Activated CD8-positive, alpha-beta T cell treated with anti-CD3 and anti-CD28 coated beads for 36 hours (primary cell): ENCODE measurements at regions of chr6 and their contacts with region 1.

Region 1: DNA sequence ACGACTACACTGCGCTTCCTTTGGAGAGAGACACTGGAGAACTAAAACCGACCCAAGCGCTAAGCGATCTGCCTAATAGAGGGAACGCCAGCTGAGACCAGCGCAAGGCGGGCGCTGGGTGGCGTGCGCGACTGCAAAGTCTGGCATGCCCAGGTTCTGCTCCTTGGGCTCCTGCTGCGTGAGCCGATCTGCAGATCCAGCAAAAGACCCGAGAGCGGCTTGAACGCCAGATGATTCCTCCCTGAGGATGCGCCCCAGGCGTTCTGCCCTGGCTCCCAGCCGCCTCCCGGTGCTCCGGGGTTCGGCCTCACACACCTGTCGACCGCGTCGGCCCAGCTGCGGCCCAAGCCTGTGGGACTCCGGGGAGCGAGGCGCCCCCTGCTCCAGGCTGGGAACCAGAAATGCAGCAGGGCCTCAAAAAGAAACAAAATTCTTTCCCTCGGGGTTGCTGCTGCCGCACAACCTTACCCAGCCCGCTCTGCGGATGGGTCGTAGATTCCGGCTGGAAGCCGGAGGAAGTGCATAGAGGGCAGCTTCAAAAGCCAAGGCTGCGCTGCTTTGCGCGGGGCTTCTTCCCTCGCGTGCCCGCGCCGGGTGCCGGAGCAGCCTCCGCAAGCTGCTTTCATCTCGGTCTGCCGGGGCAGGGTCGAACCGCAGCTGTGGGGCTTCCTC is 17.9 kb upstream of the PRDM13 start:
- DNase-seq: peak; percentile 82
- ATAC-seq: peak; percentile 93
- H3K4me3 Mint-ChIP-seq: peak overlapping the region; percentile 75
- H3K27ac Mint-ChIP-seq: no peak overlapping the region
- H3K4me1 Mint-ChIP-seq: peaks cover 22% of the 10 kb centered on the region
- H3K27me3 Mint-ChIP-seq: peaks cover 54% of the 10 kb centered on the region
- CTCF ChIP-seq: peak; percentile 71

Region 2: GRCh38 chr6:99545442-99545841 is 43.3 kb before region 1 on chr6:
- CTCF ChIA-PET with region 1: no interaction called
- POLR2A ChIA-PET with region 1: no interaction called
- intact Hi-C with region 1: no loop called
- DNase-seq: no peak
- ATAC-seq: no peak
- H3K4me3 Mint-ChIP-seq: no peak overlapping the region
- H3K27ac Mint-ChIP-seq: peak overlapping the region; percentile 30
- H3K4me1 Mint-ChIP-seq: peaks cover 3% of the 10 kb centered on the region
- H3K27me3 Mint-ChIP-seq: no peaks in the 10 kb centered on the region
- CTCF ChIP-seq: no peak

Region 3: DNA sequence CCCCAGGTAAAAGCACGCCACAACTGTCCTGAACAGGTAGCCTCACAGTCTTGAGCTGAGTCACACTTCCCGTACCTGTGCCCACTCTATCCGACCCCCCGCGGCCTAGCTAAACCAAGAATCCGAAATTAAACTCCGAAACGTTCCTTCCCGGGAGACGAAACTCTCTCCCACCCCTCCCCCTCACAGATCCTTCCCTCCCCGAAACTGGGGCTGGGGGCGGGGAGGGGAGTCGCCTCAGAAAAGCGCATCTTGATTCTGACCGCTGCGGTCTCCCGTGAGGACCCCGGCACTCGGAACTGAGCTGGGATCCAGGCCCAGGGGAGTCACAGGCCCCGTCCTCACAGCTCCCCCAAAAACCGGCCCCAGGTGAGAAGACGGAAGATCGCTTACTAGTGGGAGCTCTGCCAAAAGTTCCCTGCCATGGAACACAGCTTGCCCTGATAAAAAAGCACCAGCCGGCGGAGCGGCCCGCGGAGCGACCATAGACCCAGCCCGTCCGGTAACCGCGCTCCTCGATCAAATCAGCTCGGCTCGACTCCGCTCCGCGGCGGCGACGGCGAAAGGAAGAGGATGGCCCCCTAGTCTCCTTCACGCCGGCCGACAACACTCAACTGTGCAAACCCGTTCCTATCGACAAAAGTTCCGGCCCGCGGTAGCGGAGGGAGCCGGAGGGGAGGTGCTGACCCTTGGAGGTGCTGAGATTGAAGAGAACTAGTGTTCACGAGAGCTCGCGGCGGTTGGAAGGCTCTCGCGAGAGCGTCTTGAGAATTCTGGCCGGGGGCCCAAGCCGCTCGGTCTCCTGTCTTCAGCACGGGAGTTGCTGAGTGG is 20.4 kb before region 1 on chr6 and contains the start of gene CCNC:
- CTCF ChIA-PET with region 1: interaction called, 6 read pairs
- POLR2A ChIA-PET with region 1: interaction called, 15 read pairs
- intact Hi-C with region 1: no loop called
- DNase-seq: peak; percentile 94
- ATAC-seq: peak; percentile 98
- H3K4me3 Mint-ChIP-seq: peak within 1 kb of the TSS; percentile 97
- H3K27ac Mint-ChIP-seq: peak within 1 kb of the TSS; percentile 96
- H3K4me1 Mint-ChIP-seq: peaks cover 34% of the 10 kb centered on the region
- H3K27me3 Mint-ChIP-seq: no peaks in the 10 kb centered on the region
- CTCF ChIP-seq: no peak
- total RNA-seq, gene CCNC: 72.3 to 75.4 TPM

Region 4: DNA sequence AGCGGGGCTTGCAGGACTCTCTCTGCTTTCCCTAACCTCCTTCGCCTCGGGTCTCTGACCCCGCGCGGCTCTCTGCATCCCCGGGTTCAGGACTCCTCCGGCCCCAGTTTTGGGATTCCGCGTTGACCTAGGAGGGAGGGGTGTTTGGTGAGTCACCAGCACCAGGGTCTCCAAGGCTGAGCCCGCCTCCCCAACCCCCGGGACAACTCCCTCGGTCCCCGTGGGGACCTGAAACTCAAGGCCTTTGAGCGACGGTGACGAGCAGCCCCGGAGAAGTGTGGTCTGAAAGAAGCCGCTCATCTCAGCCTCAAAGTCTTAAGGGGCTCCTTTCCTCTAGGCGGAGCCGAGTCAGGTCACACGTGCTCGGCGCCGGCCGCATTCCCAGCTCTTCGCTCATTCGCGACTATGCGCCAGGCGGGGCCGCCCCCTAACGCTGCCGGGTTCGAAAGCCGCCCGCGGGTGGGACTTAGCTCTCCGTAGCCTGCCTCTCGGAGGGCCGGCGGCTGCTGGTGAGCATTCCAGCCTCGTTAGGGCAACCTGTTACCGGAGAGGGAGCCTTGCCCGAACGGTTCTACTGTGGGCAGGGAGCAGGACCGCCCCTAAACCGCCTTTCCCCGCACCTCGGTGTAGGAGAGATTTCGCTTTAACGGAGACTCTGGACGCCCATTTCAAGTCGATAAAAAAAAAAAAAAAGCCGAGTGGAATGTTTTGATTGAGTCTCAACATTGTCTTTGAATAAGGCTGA is 14.8 kb after region 1 on chr6:
- CTCF ChIA-PET with region 1: interaction called, 21 read pairs
- POLR2A ChIA-PET with region 1: interaction called, 9 read pairs
- intact Hi-C with region 1: no loop called
- DNase-seq: peak; percentile 51
- ATAC-seq: peak; percentile 69
- H3K4me3 Mint-ChIP-seq: peak overlapping the region; percentile 48
- H3K27ac Mint-ChIP-seq: no peak overlapping the region
- H3K4me1 Mint-ChIP-seq: peaks cover 24% of the 10 kb centered on the region
- H3K27me3 Mint-ChIP-seq: peaks cover 81% of the 10 kb centered on the region
- CTCF ChIP-seq: no peak

Region 5: GRCh38 chr6:99613409-99613704 is 24.6 kb after region 1 on chr6:
- CTCF ChIA-PET with region 1: interaction called, 21 read pairs
- POLR2A ChIA-PET with region 1: interaction called, 6 read pairs
- intact Hi-C with region 1: no loop called
- DNase-seq: peak; percentile 49
- ATAC-seq: peak; percentile 64
- H3K4me3 Mint-ChIP-seq: peak overlapping the region; percentile 66
- H3K27ac Mint-ChIP-seq: no peak overlapping the region
- H3K4me1 Mint-ChIP-seq: peaks cover 32% of the 10 kb centered on the region
- H3K27me3 Mint-ChIP-seq: peaks cover 74% of the 10 kb centered on the region
- CTCF ChIP-seq: no peak

Region 6: GRCh38 chr6:99736302-99736701 is 147.5 kb after region 1 on chr6:
- CTCF ChIA-PET with region 1: interaction called, 18 read pairs
- POLR2A ChIA-PET with region 1: no interaction called
- intact Hi-C with region 1: no loop called
- DNase-seq: peak; percentile 7
- ATAC-seq: peak; percentile 55
- H3K4me3 Mint-ChIP-seq: no peak overlapping the region
- H3K27ac Mint-ChIP-seq: no peak overlapping the region
- H3K4me1 Mint-ChIP-seq: no peaks in the 10 kb centered on the region
- H3K27me3 Mint-ChIP-seq: peaks cover 20% of the 10 kb centered on the region
- CTCF ChIP-seq: no peak

Region 7: DNA sequence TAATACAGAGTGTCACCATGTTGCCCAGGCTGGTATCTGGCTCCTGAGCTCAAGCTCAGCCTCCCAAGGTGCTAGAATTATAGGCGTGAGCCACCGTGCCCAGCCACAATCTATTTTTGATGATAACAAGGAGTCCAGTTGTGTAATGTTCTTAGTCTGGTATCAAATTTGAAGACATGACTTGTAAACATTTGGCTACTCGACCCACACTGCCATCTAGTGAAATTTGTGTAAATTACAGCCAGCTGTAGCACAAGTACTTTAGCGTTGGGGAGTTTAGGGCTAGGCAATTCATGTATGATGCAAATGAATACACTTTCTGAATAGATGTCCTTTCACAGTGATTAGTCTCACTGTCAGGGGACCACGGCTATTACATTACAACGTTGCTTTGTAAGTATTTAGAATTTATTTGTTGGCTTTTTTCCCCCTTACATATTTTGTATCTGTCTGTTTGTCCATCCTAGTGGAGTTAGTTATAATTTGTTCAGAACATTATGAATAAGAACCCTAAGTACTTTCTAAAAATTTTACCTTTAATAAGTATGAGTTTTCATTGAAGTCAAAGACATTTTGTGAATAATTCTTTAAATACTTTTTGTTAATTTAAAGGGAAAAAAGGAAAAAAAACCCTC is 157.6 kb after region 1 on chr6:
- CTCF ChIA-PET with region 1: interaction called, 93 read pairs
- POLR2A ChIA-PET with region 1: interaction called, 3 read pairs
- intact Hi-C with region 1: loop called (anchors 1 kb)
- DNase-seq: peak; percentile 71
- ATAC-seq: peak; percentile 82
- H3K4me3 Mint-ChIP-seq: no peak overlapping the region
- H3K27ac Mint-ChIP-seq: no peak overlapping the region
- H3K4me1 Mint-ChIP-seq: no peaks in the 10 kb centered on the region
- H3K27me3 Mint-ChIP-seq: peaks cover 20% of the 10 kb centered on the region
- CTCF ChIP-seq: peak; percentile 86

Region 8: DNA sequence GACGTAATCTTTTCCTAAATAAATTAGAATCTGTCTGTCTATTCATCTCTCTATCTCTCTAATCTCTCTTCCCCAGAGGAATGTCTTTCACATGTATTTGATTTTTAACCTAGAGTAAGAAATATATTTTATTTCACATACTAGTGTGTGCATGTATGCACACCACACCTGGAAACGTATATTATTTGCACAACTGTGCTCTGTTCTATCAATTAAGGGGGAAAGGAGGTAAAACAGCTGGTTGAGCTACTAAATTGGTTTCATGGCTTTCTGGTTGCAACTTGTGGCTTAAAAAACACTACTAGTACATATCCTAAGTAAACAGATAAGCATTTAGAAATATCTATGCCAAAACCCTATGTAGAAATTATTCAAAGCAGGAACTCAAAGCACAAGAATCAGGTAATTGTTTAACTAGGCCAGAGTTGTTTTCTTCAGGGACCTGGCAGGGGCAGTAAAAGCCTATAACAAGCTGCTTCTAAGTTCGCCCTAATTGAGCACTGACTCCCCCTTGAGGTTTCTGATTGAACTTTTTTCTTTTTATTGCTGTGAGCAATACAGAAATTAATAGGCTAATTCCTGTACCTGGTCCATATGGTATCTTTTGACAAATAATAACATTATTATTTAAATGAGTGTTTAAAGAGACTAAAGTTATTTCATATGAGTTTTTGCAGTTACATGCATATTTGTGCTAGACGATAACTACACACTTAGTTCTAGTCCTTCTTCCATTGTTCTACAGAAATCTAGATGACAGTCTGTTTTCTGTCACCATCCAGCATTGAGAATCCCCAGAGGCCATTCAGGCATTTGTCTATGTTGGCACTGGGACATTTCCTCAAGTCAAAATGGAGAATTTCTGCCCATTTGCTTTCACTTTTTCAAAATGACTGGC is 316.7 kb after region 1 on chr6:
- CTCF ChIA-PET with region 1: no interaction called
- POLR2A ChIA-PET with region 1: no interaction called
- intact Hi-C with region 1: no loop called
- DNase-seq: peak; percentile 1
- ATAC-seq: peak; percentile 49
- H3K4me3 Mint-ChIP-seq: no peak overlapping the region
- H3K27ac Mint-ChIP-seq: no peak overlapping the region
- H3K4me1 Mint-ChIP-seq: no peaks in the 10 kb centered on the region
- H3K27me3 Mint-ChIP-seq: peaks cover 6% of the 10 kb centered on the region
- CTCF ChIP-seq: peak; percentile 75